Gastrocnemius medialis (tissue), 4 donors: ENCODE measurements at regions of chr9 and their contacts with region 1.

Region 1: GRCh38 chr9:133184962-133185361 is 21.2 kb upstream of the GBGT1 start:
- DNase-seq: no peak
- ATAC-seq: peak in 1 of 2 donors; percentile 36
- H3K4me3 ChIP-seq: no peak overlapping the region
- H3K27ac ChIP-seq: no peak overlapping the region
- H3K4me1 ChIP-seq: no peaks in the 10 kb centered on the region
- H3K27me3 ChIP-seq: peaks cover 3 to 7% (median 4%) of the 10 kb centered on the region in 3 donors
- CTCF ChIP-seq: peak in 4 of 5 experiments; percentile 25 to 49 (median 48)
- POLR2A ChIP-seq: no peak

Region 2: GRCh38 chr9:133048569-133048968 is 136.4 kb before region 1 on chr9:
- in situ Hi-C with region 1: no loop called
- intact Hi-C with region 1: loop called (anchors 10 kb)
- DNase-seq: no peak
- ATAC-seq: no peak
- H3K4me3 ChIP-seq: no peak overlapping the region
- H3K27ac ChIP-seq: no peak overlapping the region
- H3K4me1 ChIP-seq: no peaks in the 10 kb centered on the region
- H3K27me3 ChIP-seq: no peaks in the 10 kb centered on the region
- CTCF ChIP-seq: peak in 3 of 5 experiments; percentile 15 to 35 (median 19)
- POLR2A ChIP-seq: no peak

Region 3: DNA sequence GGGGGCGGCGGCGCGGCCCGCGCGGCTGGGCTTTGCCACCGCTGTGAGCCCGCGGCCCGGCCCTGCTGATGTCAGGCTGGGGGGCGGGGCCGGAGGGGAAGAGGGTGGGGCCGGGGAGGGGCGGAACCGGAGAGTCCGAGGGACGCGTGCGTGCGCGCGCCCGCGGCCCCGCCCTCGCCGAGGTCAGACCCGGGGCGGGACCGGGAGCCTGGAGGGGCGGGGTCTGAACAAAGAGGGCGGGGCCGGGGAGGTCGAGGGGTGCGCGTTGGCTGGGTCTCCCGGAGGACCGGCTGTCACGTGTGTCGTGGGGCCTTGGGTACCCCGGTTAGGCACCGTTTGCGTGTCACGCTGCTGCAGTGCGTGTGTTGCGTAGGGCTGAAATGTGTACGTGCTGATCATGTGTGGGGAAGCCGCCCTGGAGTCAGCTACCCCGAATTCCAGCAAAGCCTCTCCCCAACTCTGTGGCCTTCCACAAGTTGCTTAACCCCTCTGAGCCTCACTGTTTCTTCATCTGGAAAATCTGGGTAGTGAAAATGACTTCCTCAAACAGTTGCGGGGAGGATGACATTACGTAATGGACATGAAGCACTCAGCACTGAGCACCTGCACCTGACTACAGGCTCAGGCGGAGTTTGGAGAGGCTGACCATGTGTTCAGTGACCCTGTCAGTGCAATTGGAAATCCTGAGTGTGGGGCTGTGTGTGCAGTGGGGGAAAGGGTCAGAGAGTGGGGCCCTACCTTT is 63.6 kb before region 1 on chr9 and contains the start of gene RALGDS:
- in situ Hi-C with region 1: no loop called
- intact Hi-C with region 1: no loop called
- DNase-seq: peak; percentile 86 to 87
- ATAC-seq: peak; percentile 66 to 67
- H3K4me3 ChIP-seq: peak within 1 kb of the TSS; percentile 53 to 86 (median 68)
- H3K27ac ChIP-seq: peak within 1 kb of the TSS; percentile 85 to 98 (median 93)
- H3K4me1 ChIP-seq: peaks cover 56 to 80% of the 10 kb centered on the region in 2 donors
- H3K27me3 ChIP-seq: no peaks in the 10 kb centered on the region
- CTCF ChIP-seq: no peak
- POLR2A ChIP-seq: no peak
- total RNA-seq, gene RALGDS: 21.1 to 47.0 (median 36.9) TPM

Region 4: DNA sequence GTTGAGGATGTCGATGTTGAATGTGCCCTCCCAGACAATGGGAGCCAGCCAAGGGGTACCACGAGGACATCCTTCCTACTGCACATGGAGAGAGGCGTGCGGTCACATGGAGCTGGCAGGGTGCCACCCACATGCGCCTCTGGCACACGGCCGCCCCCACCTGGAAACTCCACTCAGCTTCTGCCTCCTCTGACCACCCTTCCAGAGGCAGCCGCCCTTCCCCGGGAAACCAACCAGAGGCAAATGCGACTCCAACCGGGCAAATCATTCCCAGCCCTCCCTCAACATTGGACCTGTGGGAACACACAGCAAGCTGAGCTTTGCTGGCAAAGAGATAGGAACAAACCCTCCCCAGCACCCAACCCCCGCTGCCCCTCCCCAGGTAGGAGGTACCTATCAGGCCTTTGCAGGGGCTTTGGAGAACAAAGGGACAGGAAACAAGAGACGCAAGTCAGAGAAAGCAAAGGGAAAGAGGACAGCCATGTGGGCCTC is 72.5 kb after region 1 on chr9:
- in situ Hi-C with region 1: no loop called
- intact Hi-C with region 1: loop called (anchors 1 kb)
- DNase-seq: no peak
- ATAC-seq: no peak
- H3K4me3 ChIP-seq: no peak overlapping the region
- H3K27ac ChIP-seq: no peak overlapping the region
- H3K4me1 ChIP-seq: no peaks in the 10 kb centered on the region
- H3K27me3 ChIP-seq: peaks cover 0 to 9% (median 0%) of the 10 kb centered on the region in 3 donors
- CTCF ChIP-seq: no peak
- POLR2A ChIP-seq: no peak

Region 5: DNA sequence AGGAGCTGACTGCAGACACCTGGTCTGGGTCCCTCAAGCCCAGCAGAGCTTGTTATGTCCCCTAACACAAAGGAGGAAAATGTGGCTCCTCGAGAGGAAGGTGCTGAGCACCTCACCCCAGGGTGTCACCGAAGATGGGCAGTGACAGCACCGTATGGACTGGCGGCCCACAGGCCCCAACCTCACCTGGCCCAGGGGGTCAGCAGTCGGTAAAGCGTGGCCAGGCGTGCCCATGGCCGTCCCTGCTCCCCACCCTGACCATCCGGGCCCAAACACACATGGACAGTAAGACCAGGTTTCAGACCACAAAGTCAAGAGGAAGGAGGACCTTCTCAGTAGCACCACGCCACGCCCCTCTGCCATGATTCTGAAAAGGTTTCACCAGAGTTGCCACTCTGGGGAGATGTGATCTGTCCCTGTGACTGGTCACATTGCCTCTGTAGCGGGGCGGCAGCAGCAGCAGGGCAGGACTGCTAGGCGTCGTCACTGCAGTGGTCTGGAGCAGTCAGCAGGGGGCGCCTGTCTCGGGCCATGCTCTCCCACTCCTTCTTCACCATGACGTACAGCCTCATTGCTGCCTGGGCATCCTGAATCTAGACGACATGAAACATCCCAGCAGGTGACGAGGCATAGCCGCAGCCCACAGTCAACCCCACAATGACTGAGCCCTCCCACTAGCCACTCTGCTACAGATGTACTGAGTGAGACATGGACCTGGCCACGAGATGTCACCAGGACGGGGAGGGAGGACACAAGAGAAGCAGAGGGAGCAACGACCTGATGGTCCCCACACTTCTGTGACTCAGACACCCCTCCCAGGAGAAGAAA is 221.7 kb after region 1 on chr9:
- in situ Hi-C with region 1: no loop called
- intact Hi-C with region 1: loop called (anchors 2 kb)
- DNase-seq: peak; percentile 23 to 65
- ATAC-seq: peak; percentile 31 to 76
- H3K4me3 ChIP-seq: no peak overlapping the region
- H3K27ac ChIP-seq: peak overlapping the region; percentile 51 to 79 (median 70)
- H3K4me1 ChIP-seq: peaks cover 16 to 17% of the 10 kb centered on the region in 2 donors
- H3K27me3 ChIP-seq: no peaks in the 10 kb centered on the region
- CTCF ChIP-seq: peak; percentile 77 to 90 (median 83)
- POLR2A ChIP-seq: no peak

Region 6: GRCh38 chr9:133485361-133486260 is 300.6 kb after region 1 on chr9:
- in situ Hi-C with region 1: loop called in 3 of 4 experiments (anchors 10 to 25 kb)
- intact Hi-C with region 1: loop called (anchors 1 kb)
- DNase-seq: no peak
- ATAC-seq: no peak
- H3K4me3 ChIP-seq: no peak overlapping the region
- H3K27ac ChIP-seq: no peak overlapping the region
- H3K4me1 ChIP-seq: no peaks in the 10 kb centered on the region
- H3K27me3 ChIP-seq: no peaks in the 10 kb centered on the region
- CTCF ChIP-seq: no peak
- POLR2A ChIP-seq: no peak